PC-3 (cell line): ENCODE measurements at regions of chr2 and their contacts with region 1.

Region 1: GRCh38 chr2:219736209-219736608 is 108.8 kb downstream of the SLC4A3 start:
- DNase-seq: peak; percentile 86
- ATAC-seq: peak; percentile 74
- H3K4me3 ChIP-seq: no peak overlapping the region
- H3K27ac ChIP-seq: no peak overlapping the region
- H3K4me1 ChIP-seq: no peaks in the 10 kb centered on the region
- H3K27me3 ChIP-seq: no peaks in the 10 kb centered on the region
- CTCF ChIP-seq: peak; percentile 78

Region 2: GRCh38 chr2:219388127-219388844 is 347.9 kb before region 1 on chr2:
- CTCF ChIA-PET with region 1: no interaction called
- POLR2A ChIA-PET with region 1: no interaction called
- intact Hi-C with region 1: no loop called
- DNase-seq: peak; percentile 95
- ATAC-seq: peak; percentile 67
- H3K4me3 ChIP-seq: peak overlapping the region; percentile 66
- H3K27ac ChIP-seq: peak overlapping the region; percentile 5; the same call in 1 of the 2 replicates
- H3K4me1 ChIP-seq: peaks cover 15% of the 10 kb centered on the region
- H3K27me3 ChIP-seq: no peaks in the 10 kb centered on the region
- CTCF ChIP-seq: peak; percentile 64

Region 3: DNA sequence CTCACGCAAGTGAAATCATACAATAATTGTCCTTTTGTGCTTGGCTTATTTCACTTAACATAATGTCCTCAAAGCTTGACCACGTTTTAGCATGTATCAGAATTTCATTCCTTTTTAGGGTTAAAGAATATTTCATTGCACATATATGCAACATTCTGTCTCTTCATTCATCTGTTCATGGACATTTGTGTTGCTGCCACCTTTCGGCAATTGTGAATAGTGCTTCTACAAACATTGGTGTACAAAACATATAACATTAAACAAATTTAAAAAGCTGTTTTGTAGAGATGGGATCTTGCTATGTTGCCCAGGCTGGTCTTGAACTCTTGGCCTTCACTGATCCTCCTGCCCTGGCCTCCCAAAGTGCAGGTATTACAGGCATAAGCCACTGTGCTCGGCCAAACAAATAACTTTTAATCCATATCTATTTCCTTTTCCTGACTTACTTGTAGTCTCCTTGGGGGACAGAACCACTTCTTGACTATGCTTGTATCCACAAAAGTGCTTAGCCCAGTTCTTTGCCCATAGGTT is 100.5 kb after region 1 on chr2:
- CTCF ChIA-PET with region 1: no interaction called
- POLR2A ChIA-PET with region 1: no interaction called
- intact Hi-C with region 1: loop called (anchors 1 kb)
- DNase-seq: peak; percentile 74
- ATAC-seq: peak; percentile 56; the same call in 1 of the 2 replicates
- H3K4me3 ChIP-seq: no peak overlapping the region
- H3K27ac ChIP-seq: no peak overlapping the region
- H3K4me1 ChIP-seq: no peaks in the 10 kb centered on the region
- H3K27me3 ChIP-seq: peaks cover 5% of the 10 kb centered on the region; the same call in 1 of the 2 replicates
- CTCF ChIP-seq: peak; percentile 78

Region 4: DNA sequence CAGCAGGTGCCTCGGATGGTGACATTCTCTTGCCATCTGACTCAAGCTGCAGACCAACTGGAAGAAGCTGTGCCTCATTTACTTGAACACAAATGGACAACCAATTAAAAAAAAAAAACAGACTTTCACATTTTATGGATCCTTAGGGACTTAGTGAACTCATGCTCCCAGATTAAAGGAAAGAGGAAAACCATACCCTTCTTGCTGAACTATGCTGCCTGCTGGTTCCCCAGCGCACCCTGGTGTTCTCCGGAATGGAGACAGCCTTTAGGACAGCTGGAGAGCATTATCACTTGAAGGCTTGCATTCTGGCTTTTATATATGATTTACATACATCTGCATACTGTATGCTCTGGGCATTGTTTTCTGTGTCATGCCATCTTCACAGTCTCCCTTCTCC is 261.9 kb after region 1 on chr2:
- CTCF ChIA-PET with region 1: no interaction called
- POLR2A ChIA-PET with region 1: interaction called, 3 read pairs
- intact Hi-C with region 1: loop called (anchors 1 kb)
- DNase-seq: peak; percentile 23
- ATAC-seq: peak; percentile 73
- H3K4me3 ChIP-seq: no peak overlapping the region
- H3K27ac ChIP-seq: no peak overlapping the region
- H3K4me1 ChIP-seq: peaks cover 8% of the 10 kb centered on the region; the same call in 1 of the 2 replicates
- H3K27me3 ChIP-seq: no peaks in the 10 kb centered on the region
- CTCF ChIP-seq: peak; percentile 40

Region 5: DNA sequence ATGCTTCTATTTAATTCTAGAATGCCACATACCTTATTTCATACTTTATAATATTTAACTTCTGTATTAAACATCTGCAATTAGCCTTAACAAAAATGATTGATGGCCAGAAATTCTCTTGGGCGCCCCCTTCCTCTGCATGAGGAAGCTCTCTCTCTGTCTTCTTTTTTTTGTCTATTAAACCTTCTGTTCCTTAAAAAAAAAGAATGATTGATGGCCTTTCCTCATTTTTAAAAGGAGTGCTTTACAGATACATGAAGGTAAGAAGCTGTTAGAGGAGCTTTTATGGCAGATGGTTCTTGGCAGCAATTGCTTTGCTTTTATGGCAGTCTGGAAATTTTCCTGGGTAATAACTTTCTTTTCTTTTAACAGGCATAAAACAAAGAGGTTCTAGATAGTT is 418.1 kb after region 1 on chr2:
- CTCF ChIA-PET with region 1: no interaction called
- POLR2A ChIA-PET with region 1: no interaction called
- intact Hi-C with region 1: loop called (anchors 5 kb)
- DNase-seq: no peak
- ATAC-seq: no peak
- H3K4me3 ChIP-seq: no peak overlapping the region
- H3K27ac ChIP-seq: no peak overlapping the region
- H3K4me1 ChIP-seq: no peaks in the 10 kb centered on the region
- H3K27me3 ChIP-seq: no peaks in the 10 kb centered on the region
- CTCF ChIP-seq: peak; percentile 54; the same call in 1 of the 2 replicates

Region 6: GRCh38 chr2:220192994-220193753 is 457.0 kb after region 1 on chr2:
- CTCF ChIA-PET with region 1: no interaction called
- POLR2A ChIA-PET with region 1: no interaction called
- intact Hi-C with region 1: loop called (anchors 1 kb)
- DNase-seq: peak; percentile 98
- ATAC-seq: peak; percentile 86
- H3K4me3 ChIP-seq: no peak overlapping the region
- H3K27ac ChIP-seq: peak overlapping the region; percentile 96
- H3K4me1 ChIP-seq: peaks cover 41% of the 10 kb centered on the region
- H3K27me3 ChIP-seq: no peaks in the 10 kb centered on the region
- CTCF ChIP-seq: peak; percentile 51